HepG2 (cell line): ENCODE measurements at regions of chr1 and their contacts with region 1.

Region 1: GRCh38 chr1:72296481-72296880 is 14.1 kb upstream of the NEGR1 start:
- DNase-seq: no peak
- ATAC-seq: no peak
- H3K4me3 ChIP-seq: no peak overlapping the region
- H3K27ac ChIP-seq: no peak overlapping the region
- H3K4me1 ChIP-seq: no peaks in the 10 kb centered on the region
- H3K27me3 ChIP-seq: no peaks in the 10 kb centered on the region
- CTCF ChIP-seq: no peak
- EP300 ChIP-seq: no peak
- POLR2A ChIP-seq: no peak
- RAD21 ChIP-seq: no peak

Region 2: GRCh38 chr1:72341661-72342060 is 45.2 kb after region 1 on chr1:
- CTCF ChIA-PET with region 1: no interaction called
- POLR2A ChIA-PET with region 1: no interaction called
- in situ Hi-C with region 1: loop called (anchors 5 kb)
- intact Hi-C with region 1: loop called (anchors 1 kb)
- DNase-seq: no peak
- ATAC-seq: no peak
- H3K4me3 ChIP-seq: no peak overlapping the region
- H3K27ac ChIP-seq: no peak overlapping the region
- H3K4me1 ChIP-seq: no peaks in the 10 kb centered on the region
- H3K27me3 ChIP-seq: no peaks in the 10 kb centered on the region
- CTCF ChIP-seq: no peak
- EP300 ChIP-seq: no peak
- POLR2A ChIP-seq: no peak
- RAD21 ChIP-seq: no peak

Region 3: GRCh38 chr1:72435025-72435424 is 138.5 kb after region 1 on chr1:
- CTCF ChIA-PET with region 1: no interaction called
- POLR2A ChIA-PET with region 1: no interaction called
- in situ Hi-C with region 1: no loop called
- intact Hi-C with region 1: no loop called
- DNase-seq: no peak
- ATAC-seq: no peak
- H3K4me3 ChIP-seq: no peak overlapping the region
- H3K27ac ChIP-seq: no peak overlapping the region
- H3K4me1 ChIP-seq: no peaks in the 10 kb centered on the region
- H3K27me3 ChIP-seq: no peaks in the 10 kb centered on the region
- CTCF ChIP-seq: no peak
- EP300 ChIP-seq: no peak
- POLR2A ChIP-seq: no peak
- RAD21 ChIP-seq: no peak